PC-3 (cell line): ENCODE measurements at regions of chr14 and their contacts with region 1.

Region 1: GRCh38 chr14:20682435-20683124 is 1.8 kb upstream of the RNASE4 start:
- DNase-seq: peak; percentile 91
- ATAC-seq: peak; percentile 63
- H3K4me3 ChIP-seq: peak overlapping the region; percentile 85
- H3K27ac ChIP-seq: peak overlapping the region; percentile 80
- H3K4me1 ChIP-seq: peaks cover 25% of the 10 kb centered on the region
- H3K27me3 ChIP-seq: no peaks in the 10 kb centered on the region
- CTCF ChIP-seq: no peak; the same call in 1 of the 2 replicates

Region 2: DNA sequence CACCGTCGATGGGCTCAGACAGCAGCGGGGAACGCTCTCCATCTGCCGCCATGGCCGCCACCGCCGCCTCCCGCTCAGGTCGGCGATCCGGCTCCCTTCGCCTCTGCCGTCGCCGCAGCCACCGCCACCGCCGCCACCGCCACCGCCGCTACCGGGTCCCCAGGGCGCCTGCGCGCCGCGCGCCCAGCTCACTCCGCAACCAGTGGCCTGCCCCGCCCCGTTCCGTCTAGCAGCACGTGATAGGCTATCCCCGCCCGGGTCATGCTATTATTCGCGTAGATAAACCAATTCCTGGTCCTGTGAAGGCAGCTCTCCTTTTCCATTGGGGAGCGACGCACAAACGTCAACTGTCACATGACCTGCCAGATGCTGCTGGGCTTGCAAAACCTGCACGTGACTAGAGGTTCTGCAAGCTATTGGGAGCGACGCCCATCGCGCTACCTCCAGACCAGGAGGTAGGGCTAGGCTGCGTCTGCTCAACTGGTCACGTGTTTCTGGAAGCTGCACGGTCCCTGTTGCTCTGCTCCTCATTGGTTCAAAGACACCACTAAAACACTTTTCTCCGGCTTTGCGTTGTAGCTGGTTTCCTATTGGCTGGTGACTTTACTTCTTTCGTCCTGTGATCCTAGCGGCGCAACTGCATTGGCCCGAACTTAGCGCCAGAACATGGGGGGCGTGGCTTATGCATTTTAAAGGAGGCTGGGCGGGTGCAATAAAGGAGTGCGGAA is 221.1 kb before region 1 on chr14 and contains the start of gene PIP4P1:
- CTCF ChIA-PET with region 1: no interaction called
- POLR2A ChIA-PET with region 1: interaction called, 4 read pairs
- intact Hi-C with region 1: loop called (anchors 2 kb)
- DNase-seq: peak; percentile 99
- ATAC-seq: peak; percentile 95
- H3K4me3 ChIP-seq: peak within 1 kb of the TSS; percentile 76
- H3K27ac ChIP-seq: peak within 1 kb of the TSS; percentile 63
- H3K4me1 ChIP-seq: peaks cover 18% of the 10 kb centered on the region
- H3K27me3 ChIP-seq: no peaks in the 10 kb centered on the region
- CTCF ChIP-seq: no peak
- total RNA-seq, gene PIP4P1: 32.9 and 35.2 TPM in 2 replicates

Region 3: DNA sequence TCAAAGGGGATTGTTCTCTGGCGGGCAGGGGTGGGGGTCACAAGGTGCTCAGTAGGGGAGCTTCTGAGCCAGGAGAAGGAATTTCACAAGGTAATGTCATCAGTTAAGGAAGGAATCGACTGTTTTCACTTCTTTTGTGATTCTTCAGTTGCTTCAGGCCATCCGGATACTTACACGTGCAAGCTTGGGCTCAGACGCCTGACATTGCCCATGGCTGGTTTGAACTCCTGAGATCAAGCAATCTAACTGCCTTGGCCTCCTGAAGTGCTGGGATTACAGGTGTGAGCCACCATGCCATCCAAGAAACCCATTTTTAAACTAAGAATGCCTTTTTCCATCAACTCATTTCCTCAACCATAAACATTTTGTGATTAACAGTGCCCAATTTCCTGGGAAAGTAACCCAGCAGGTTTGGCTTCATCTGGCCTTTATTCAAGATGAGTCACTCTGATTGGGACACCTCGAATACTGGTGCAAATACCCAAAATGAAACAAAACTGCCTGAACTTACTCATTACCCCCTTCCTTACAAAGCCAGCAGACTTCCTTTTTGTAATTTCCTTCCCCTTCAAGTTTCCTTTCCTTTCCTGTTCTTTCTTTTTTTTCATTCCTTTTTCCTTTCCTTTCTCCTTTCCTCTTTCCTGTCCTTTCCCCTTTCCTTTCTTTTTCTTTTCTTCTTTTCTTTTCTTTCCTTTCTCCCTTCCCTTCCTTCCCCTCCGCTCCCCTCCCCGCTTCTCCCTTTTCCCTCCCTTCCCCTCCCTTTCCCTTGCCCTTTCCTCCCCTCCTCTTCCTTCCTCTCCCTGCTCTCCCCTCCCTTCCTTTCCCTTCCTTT is 187.4 kb before region 1 on chr14:
- CTCF ChIA-PET with region 1: no interaction called
- POLR2A ChIA-PET with region 1: no interaction called
- intact Hi-C with region 1: no loop called
- DNase-seq: peak; percentile 93
- ATAC-seq: peak; percentile 52
- H3K4me3 ChIP-seq: peak overlapping the region; percentile 36; the same call in 1 of the 2 replicates
- H3K27ac ChIP-seq: peak overlapping the region; percentile 78
- H3K4me1 ChIP-seq: peaks cover 48% of the 10 kb centered on the region
- H3K27me3 ChIP-seq: no peaks in the 10 kb centered on the region
- CTCF ChIP-seq: no peak

Region 4: DNA sequence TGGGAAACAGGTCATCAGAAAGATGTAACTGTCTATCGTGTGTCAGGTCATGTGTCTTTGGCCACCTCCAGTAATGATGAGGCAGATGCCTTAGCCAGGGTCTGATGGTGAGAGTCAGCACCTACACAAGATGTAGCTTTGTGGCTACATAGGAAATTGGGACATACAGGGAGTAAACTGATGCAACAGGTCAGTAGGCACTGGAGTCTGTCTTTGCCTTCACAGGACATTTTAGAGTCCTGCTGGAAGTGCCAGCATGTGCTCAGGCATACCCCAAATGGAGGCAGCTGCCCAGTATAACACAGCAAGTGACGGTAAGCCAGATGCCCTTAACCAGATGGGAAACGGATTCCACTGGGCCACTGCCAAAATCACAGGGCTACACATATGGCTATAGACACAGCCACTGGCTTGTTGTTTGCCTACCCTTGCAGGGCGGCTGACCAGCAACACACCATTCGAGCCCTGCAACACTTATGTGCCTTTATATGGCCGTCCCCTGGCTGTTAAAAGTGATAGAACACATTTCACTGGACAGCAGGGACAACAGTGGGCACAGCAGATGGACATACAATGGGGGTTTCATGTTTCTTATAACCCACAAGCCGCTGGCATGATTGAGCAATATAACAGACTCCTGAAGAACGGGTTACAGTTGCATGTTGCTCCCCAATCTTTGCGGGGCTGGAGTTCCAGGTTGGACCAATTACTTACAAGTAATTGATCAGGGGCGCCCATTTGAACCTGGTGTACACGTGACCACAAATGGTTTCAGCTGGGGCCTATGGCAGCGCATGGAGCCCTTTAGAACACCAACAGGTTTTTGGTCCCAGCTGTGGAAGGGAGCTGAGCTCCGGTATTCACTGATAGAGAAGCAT is 78.5 kb before region 1 on chr14:
- CTCF ChIA-PET with region 1: no interaction called
- POLR2A ChIA-PET with region 1: no interaction called
- intact Hi-C with region 1: no loop called
- DNase-seq: no peak
- ATAC-seq: no peak
- H3K4me3 ChIP-seq: no peak overlapping the region
- H3K27ac ChIP-seq: no peak overlapping the region
- H3K4me1 ChIP-seq: peaks cover 12% of the 10 kb centered on the region; the same call in 1 of the 2 replicates
- H3K27me3 ChIP-seq: no peaks in the 10 kb centered on the region
- CTCF ChIP-seq: no peak

Region 5: DNA sequence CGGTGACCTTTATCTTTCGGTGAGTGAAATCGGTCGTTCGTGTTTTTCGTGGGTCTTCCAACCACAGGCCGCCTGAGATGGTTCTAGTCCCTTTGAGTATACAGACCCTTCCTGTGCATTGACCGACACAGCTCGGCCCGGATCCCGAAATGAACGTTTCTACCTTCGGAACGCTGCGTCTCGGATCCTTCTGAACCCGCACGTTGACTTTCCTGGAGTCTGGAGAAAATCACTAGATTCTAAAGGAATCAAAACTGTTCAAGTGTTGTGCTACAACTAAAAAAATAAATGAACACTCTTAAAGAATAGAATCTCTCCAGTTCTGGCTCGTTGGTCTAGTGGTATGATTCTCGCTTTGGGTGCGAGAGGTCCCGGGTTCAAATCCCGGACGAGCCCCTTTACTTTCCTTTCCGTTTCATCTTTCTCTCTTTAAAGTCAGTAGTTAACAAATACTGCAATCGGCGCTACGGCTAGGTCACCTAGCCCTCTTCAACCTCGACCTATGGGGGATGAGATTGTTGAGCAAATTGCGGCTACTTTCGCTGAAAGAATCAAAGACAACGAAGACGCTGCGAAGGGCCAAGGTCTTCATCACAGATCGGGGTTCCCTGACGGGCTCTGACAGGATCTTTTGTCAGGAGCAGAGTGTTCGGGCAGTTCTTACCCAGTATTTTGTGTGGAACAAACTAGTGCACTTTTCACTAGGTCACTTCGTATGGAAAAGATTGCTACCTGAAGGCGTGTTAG is 49.7 kb before region 1 on chr14:
- CTCF ChIA-PET with region 1: no interaction called
- POLR2A ChIA-PET with region 1: interaction called, 3 read pairs
- intact Hi-C with region 1: loop called (anchors 1 kb)
- DNase-seq: peak; percentile 91
- ATAC-seq: peak; percentile 66
- H3K4me3 ChIP-seq: peak overlapping the region; percentile 70
- H3K27ac ChIP-seq: no peak overlapping the region
- H3K4me1 ChIP-seq: peaks cover 12% of the 10 kb centered on the region; the same call in 1 of the 2 replicates
- H3K27me3 ChIP-seq: no peaks in the 10 kb centered on the region
- CTCF ChIP-seq: no peak

Region 6: GRCh38 chr14:20662968-20663732 is 19.4 kb before region 1 on chr14:
- CTCF ChIA-PET with region 1: interaction called, 12 read pairs
- POLR2A ChIA-PET with region 1: no interaction called
- intact Hi-C with region 1: loop called (anchors 1 kb)
- DNase-seq: peak; percentile 90
- ATAC-seq: peak; percentile 90
- H3K4me3 ChIP-seq: peak overlapping the region; percentile 70
- H3K27ac ChIP-seq: no peak overlapping the region
- H3K4me1 ChIP-seq: no peaks in the 10 kb centered on the region; the same call in 1 of the 2 replicates
- H3K27me3 ChIP-seq: no peaks in the 10 kb centered on the region
- CTCF ChIP-seq: peak; percentile 88

Region 7: DNA sequence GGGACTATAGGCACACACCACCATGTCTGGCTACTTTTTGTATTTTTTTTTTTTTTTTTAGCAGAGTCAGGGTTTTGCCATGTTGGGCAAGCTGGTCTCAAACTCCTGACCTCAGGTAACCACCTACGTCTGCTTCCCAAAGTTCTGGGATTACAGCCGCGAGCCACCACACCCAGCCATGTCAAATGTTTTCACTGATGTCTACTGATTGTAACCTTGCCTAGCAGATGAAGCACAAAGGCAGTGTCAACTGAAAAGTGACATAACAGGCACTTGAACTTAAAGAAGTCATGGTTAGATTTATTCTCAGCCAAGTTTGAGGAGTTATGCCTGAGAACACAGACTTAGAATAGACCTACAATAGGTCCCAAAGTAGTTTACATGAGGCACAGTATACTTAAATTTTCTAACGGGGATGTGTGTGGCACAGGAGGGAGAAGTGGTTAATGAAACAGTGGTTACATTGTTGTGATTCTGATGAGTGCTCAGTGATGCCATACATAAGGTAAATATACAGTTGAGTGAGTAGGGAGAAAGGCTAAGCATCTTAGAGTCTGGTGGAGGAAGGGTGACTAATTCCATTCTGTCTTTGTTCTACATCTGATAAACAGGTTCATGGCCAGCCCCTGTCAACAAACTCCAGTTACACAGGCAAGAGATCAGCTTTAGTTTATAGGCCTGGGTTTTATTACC is 10.8 kb before region 1 on chr14:
- CTCF ChIA-PET with region 1: no interaction called
- POLR2A ChIA-PET with region 1: no interaction called
- intact Hi-C with region 1: loop called (anchors 1 kb)
- DNase-seq: peak; percentile 90
- ATAC-seq: peak; percentile 98
- H3K4me3 ChIP-seq: no peak overlapping the region
- H3K27ac ChIP-seq: peak overlapping the region; percentile 86
- H3K4me1 ChIP-seq: peaks cover 26% of the 10 kb centered on the region
- H3K27me3 ChIP-seq: no peaks in the 10 kb centered on the region
- CTCF ChIP-seq: no peak